Left lung (tissue), 14 donors: ENCODE measurements at regions of chr16 and their contacts with region 1.

Region 1: DNA sequence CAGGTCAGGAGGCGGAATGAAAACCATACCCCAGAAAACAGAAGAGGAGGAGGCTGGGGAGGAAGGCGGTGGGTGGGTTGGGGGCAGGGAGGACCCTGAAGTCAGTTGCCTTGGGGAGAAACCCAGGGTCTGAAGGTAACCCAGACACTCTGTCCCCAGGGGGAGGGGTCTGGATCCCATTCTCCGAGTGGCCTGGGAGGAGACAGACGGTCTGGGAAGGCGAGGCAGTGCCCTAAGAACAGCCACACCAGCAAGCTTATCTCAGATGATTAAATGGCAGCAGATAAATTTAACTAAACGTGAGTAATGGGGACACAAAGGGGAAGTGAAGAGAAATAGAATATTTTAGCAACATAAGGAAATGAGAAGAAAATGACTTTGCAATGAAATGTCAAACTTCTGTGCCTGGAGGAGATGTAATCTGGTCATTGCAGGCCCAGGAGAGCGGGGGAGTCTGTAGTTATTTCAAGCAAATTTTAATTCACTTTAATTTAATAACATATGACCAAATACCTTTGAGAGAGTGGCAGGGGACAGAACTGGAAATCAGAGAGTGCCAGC is 21.4 kb upstream of the ZFP90 start:
- DNase-seq: no peak
- ATAC-seq: no peak
- H3K4me3 ChIP-seq: no peak overlapping the region
- H3K27ac ChIP-seq: no peak overlapping the region
- H3K4me1 ChIP-seq: no peaks in the 10 kb centered on the region
- H3K27me3 ChIP-seq: no peaks in the 10 kb centered on the region
- CTCF ChIP-seq: no peak

Region 2: DNA sequence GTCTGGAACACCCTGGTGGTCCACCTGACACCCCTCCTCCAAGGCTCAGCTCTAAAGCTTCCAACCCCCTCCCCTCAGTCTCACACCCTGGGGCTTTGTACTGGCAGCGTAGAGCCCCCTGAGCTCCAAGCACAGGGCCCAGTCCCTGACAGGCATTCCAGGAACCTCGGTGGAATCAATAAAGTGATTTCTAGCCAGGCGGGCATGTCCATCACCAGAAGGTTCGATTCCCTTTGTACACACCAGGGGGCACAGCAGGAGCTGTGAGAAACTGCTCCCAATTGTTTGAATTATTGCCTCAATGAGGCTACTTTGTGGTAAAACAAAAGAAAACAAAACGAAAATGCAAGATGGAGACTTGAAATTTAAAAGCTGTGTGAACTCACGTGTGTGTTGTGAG is 121.2 kb before region 1 on chr16:
- intact Hi-C with region 1: loop called in 1 of 2 experiments (anchors 10 kb)
- DNase-seq: peak in 2 of 4 donors; percentile 28 to 33
- ATAC-seq: peak; percentile 82
- H3K4me3 ChIP-seq: no peak overlapping the region
- H3K27ac ChIP-seq: no peak overlapping the region
- H3K4me1 ChIP-seq: no peaks in the 10 kb centered on the region
- H3K27me3 ChIP-seq: no peaks in the 10 kb centered on the region
- CTCF ChIP-seq: peak; percentile 46 to 64